Calu3 (cell line): ENCODE measurements at regions of chr1 and their contacts with region 1.

Region 1: GRCh38 chr1:24070821-24071393 is 41.0 kb downstream of the MYOM3 start:
- DNase-seq: peak; percentile 80
- H3K4me3 Mint-ChIP-seq: no peak overlapping the region
- H3K27ac Mint-ChIP-seq: no peak overlapping the region
- H3K4me1 Mint-ChIP-seq: no peaks in the 10 kb centered on the region
- H3K27me3 Mint-ChIP-seq: no peaks in the 10 kb centered on the region
- CTCF ChIP-seq: peak; percentile 68

Region 2: DNA sequence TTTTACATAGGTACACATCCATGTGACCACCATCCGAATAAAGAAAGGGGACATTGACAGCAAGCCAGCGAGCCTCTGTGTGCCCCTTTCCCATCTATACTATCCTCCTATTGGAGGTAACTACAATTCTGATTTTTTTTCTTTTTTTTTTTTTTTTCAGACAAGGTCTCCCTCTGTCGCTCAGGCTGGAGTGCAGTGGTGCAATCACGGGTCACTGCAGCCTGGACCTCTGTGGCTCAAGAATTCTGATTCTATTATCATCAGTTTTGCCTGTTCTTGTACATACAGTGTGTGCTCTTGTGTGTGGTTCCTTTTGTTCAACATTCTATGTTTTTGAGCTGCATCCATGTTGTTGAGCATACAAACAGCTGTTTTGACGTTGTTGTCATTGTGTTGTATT is 34.8 kb before region 1 on chr1:
- CTCF ChIA-PET with region 1: no interaction called
- intact Hi-C with region 1: no loop called
- DNase-seq: no peak
- H3K4me3 Mint-ChIP-seq: no peak overlapping the region
- H3K27ac Mint-ChIP-seq: no peak overlapping the region
- H3K4me1 Mint-ChIP-seq: no peaks in the 10 kb centered on the region
- H3K27me3 Mint-ChIP-seq: no peaks in the 10 kb centered on the region
- CTCF ChIP-seq: no peak

Region 3: DNA sequence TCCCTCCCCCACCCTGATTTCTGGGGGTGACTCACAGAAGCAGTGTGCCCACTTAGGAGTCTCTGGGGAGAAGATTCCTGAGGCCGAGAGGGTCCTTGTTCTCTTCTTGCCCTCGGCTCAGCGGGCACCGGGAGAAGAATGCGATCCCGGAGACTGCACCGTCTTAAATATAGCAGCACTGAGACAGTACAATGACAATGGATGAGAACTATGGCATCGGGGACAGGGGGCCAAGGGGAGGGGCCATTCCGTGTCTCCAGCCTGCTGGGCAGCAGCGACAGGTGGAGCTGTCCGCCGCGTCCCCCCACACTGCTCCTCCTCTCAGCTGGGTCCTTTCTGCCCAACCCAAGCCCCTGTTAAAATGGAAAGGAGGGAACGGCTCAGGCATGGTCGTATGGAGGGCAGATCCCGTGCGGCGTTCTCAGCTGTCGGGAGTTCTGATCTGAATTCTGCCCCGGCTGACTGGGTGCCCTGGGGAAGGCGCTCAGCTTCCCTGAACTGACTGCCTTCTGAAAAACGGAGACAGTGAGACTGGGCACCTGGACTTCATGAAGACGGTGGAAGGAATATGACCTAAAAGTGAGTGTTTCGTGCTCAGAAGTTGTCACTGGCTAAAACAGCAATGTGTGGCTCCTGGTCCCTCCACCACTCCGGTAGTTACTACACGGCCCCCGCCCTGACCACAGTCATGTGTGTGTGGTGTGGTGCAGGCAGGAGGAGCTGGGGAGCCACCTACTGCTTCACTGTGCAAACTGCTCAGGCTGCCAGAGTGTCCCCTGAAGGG is 41.3 kb after region 1 on chr1 and contains the start of gene MYOM3:
- CTCF ChIA-PET with region 1: interaction called, 6 read pairs
- intact Hi-C with region 1: loop called (anchors 2 kb)
- DNase-seq: peak; percentile 63
- H3K4me3 Mint-ChIP-seq: no peak within 1 kb of the TSS
- H3K27ac Mint-ChIP-seq: no peak within 1 kb of the TSS
- H3K4me1 Mint-ChIP-seq: peaks cover 6% of the 10 kb centered on the region
- H3K27me3 Mint-ChIP-seq: no peaks in the 10 kb centered on the region
- CTCF ChIP-seq: no peak
- total RNA-seq, gene MYOM3: 0.42 and 1.0 TPM in 2 replicates

Region 4: DNA sequence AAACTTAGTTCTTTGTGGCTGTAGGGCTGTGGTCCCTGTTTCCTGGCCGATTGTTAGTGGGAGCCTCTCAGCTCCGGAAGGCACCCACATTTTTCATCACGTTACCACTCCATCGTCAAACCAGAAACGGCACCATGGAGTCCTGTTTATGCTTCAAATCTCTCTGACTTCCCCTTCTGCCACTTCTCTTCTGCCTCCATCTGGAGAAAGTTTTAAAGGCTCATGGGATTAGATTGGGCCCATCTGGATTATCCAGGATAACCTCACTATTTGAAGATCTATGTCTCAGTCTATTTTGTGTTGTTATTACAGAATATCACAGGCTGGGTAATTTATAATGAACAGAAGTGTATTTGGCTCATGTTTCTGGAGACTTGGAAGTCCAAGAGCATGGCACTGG is 91.3 kb after region 1 on chr1:
- CTCF ChIA-PET with region 1: no interaction called
- intact Hi-C with region 1: no loop called
- DNase-seq: no peak
- H3K4me3 Mint-ChIP-seq: no peak overlapping the region
- H3K27ac Mint-ChIP-seq: no peak overlapping the region
- H3K4me1 Mint-ChIP-seq: no peaks in the 10 kb centered on the region
- H3K27me3 Mint-ChIP-seq: no peaks in the 10 kb centered on the region
- CTCF ChIP-seq: no peak